ENCODE measurements at regions of chr6 and their contacts with region 1.

Region 1: DNA sequence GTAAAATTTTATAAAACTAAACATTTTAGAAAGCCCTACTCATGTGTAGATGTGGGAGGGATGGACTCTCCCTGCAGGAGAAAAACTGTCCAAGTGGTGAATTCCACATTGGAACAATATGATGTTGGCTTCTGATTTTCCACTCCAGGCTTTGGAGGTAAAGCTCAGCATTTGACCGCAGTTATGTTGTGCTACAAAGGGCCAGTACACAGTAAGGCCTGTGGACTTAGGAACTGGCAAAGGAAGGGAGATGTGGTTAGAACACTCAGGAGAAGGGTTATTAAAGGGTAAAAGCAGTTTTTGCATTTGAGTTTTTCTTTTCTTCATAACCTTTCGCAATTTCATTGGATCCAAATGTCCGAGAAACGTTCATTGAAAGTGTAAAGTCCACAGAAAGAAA is 150.3 kb upstream of the SASH1 start:
- DNase-seq: no peak
- ATAC-seq: peak; percentile 63
- H3K4me3 ChIP-seq: no peak overlapping the region
- H3K27ac ChIP-seq: peak overlapping the region; percentile 56 to 61
- H3K4me1 ChIP-seq: no peaks in the 10 kb centered on the region
- H3K27me3 ChIP-seq: no peaks in the 10 kb centered on the region
- CTCF ChIP-seq: no peak

Region 2: DNA sequence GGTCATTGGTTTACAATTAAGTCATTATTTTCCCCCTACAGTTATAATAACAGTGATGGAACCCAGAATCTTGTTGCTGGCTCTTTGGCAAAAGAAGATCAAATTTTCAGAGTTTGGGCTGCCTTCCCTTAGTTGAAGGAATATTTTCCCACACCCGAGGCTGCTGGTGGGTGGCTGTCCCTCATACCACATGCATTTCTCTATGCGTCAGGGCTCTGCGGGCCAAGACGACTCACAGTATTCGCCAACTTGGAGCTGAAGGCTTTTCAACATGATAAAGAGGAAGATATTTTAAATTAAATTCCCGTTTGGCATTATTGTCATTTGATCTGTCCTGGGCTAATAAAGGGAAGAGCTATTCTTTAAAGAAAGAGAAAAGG is 48.1 kb after region 1 on chr6:
- intact Hi-C with region 1: loop called in 1 of 2 experiments (anchors 10 kb)
- DNase-seq: peak in 2 of 4 donors; percentile 20 to 33
- ATAC-seq: peak; percentile 47
- H3K4me3 ChIP-seq: no peak overlapping the region
- H3K27ac ChIP-seq: peak overlapping the region in 1 of 2 donors; percentile 42
- H3K4me1 ChIP-seq: no peaks in the 10 kb centered on the region
- H3K27me3 ChIP-seq: no peaks in the 10 kb centered on the region
- CTCF ChIP-seq: no peak

Region 3: DNA sequence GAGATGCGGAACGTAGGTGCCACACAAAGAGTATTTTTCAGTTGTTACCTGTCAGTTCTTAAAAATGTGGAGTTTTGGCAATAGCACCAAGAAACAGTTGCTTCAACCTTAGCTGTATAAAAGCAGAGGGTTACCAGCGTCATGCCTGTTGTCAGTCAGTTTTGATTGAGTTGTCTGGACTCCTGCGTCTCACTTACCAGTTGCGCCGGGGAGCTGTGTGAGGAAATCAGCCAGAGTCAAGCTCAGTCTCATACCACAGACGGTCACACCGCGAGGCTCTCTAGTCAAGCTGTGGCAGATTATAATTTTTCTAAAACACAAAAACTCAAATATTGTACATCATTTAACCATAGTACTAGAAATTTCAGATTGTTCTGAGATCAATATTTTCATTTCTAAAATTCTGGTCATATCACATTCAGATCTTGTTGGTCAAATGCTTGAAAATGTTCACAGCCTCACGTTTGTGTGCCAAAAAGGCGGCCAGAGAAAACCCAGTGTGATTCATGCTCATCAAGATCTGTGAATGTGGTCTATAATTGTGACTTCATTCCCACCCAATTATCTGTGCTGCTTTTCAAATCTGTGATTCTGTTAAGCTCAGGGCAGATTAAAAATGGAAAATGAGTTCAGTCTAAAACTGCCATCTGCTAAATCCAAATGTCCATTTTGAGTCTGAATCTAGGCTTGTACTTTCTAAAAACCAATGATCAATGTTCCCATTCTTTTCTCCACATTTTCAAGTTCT is 187.8 kb after region 1 on chr6:
- intact Hi-C with region 1: no loop called
- DNase-seq: no peak
- ATAC-seq: no peak
- H3K4me3 ChIP-seq: no peak overlapping the region
- H3K27ac ChIP-seq: no peak overlapping the region
- H3K4me1 ChIP-seq: peaks cover 12 to 32% of the 10 kb centered on the region in 2 donors
- H3K27me3 ChIP-seq: no peaks in the 10 kb centered on the region
- CTCF ChIP-seq: no peak